ENCODE measurements at regions of chr5 and their contacts with region 1.

Region 1: GRCh38 chr5:68252673-68253623 is 37.4 kb downstream of the PIK3R1 start:
- DNase-seq: peak; percentile 67
- ATAC-seq: peak; percentile 34
- H3K4me3 Mint-ChIP-seq: no peak overlapping the region
- H3K27ac Mint-ChIP-seq: peak overlapping the region; percentile 17
- H3K4me1 Mint-ChIP-seq: peaks cover 90% of the 10 kb centered on the region
- H3K27me3 Mint-ChIP-seq: no peaks in the 10 kb centered on the region
- CTCF ChIP-seq: peak; percentile 67

Region 2: GRCh38 chr5:67246108-67246507 is 1006.8 kb before region 1 on chr5:
- CTCF ChIA-PET with region 1: interaction called, 17 read pairs
- POLR2A ChIA-PET with region 1: no interaction called
- intact Hi-C with region 1: loop called (anchors 10 kb)
- DNase-seq: peak; percentile 13
- ATAC-seq: peak; percentile 30
- H3K4me3 Mint-ChIP-seq: no peak overlapping the region
- H3K27ac Mint-ChIP-seq: no peak overlapping the region
- H3K4me1 Mint-ChIP-seq: peaks cover 11% of the 10 kb centered on the region
- H3K27me3 Mint-ChIP-seq: no peaks in the 10 kb centered on the region
- CTCF ChIP-seq: peak; percentile 85

Region 3: GRCh38 chr5:68159224-68159951 is 93.6 kb before region 1 on chr5:
- CTCF ChIA-PET with region 1: no interaction called
- POLR2A ChIA-PET with region 1: no interaction called
- intact Hi-C with region 1: no loop called
- DNase-seq: no peak
- ATAC-seq: no peak
- H3K4me3 Mint-ChIP-seq: no peak overlapping the region
- H3K27ac Mint-ChIP-seq: no peak overlapping the region
- H3K4me1 Mint-ChIP-seq: no peaks in the 10 kb centered on the region
- H3K27me3 Mint-ChIP-seq: no peaks in the 10 kb centered on the region
- CTCF ChIP-seq: no peak

Region 4: DNA sequence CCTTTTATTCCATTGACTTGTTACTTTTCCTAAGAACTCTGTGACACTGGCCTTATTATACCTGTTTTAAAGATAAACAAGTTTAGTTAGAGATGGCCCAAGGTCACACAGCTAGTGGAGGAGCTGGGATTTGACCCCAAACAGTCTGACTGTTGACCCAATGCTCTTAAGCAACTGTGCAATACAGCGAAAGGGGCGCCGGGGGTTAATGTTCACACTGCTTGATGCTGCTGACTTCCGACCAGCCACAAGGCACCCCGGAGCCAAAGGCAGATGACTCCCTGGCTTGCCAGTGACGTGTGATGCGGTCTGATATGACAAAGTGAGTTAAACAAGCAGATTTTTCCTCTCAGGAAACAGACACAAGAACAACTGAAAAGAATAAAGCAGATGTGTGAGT is 13.5 kb before region 1 on chr5:
- CTCF ChIA-PET with region 1: interaction called, 10 read pairs
- POLR2A ChIA-PET with region 1: interaction called, 3 read pairs
- intact Hi-C with region 1: no loop called
- DNase-seq: peak; percentile 96
- ATAC-seq: peak; percentile 96
- H3K4me3 Mint-ChIP-seq: peak overlapping the region; percentile 30
- H3K27ac Mint-ChIP-seq: peak overlapping the region; percentile 80
- H3K4me1 Mint-ChIP-seq: peaks cover 78% of the 10 kb centered on the region
- H3K27me3 Mint-ChIP-seq: no peaks in the 10 kb centered on the region
- CTCF ChIP-seq: no peak

Region 5: GRCh38 chr5:68272289-68272688 is 19.3 kb after region 1 on chr5:
- CTCF ChIA-PET with region 1: interaction called, 35 read pairs
- POLR2A ChIA-PET with region 1: no interaction called
- intact Hi-C with region 1: no loop called
- DNase-seq: no peak
- ATAC-seq: no peak
- H3K4me3 Mint-ChIP-seq: no peak overlapping the region
- H3K27ac Mint-ChIP-seq: no peak overlapping the region
- H3K4me1 Mint-ChIP-seq: peaks cover 85% of the 10 kb centered on the region
- H3K27me3 Mint-ChIP-seq: no peaks in the 10 kb centered on the region
- CTCF ChIP-seq: peak; percentile 67

Region 6: GRCh38 chr5:68303038-68303738 is 50.2 kb after region 1 on chr5:
- CTCF ChIA-PET with region 1: no interaction called
- POLR2A ChIA-PET with region 1: no interaction called
- intact Hi-C with region 1: no loop called
- DNase-seq: no peak
- ATAC-seq: peak; percentile 57
- H3K4me3 Mint-ChIP-seq: no peak overlapping the region
- H3K27ac Mint-ChIP-seq: peak overlapping the region; percentile 77
- H3K4me1 Mint-ChIP-seq: peaks cover 36% of the 10 kb centered on the region
- H3K27me3 Mint-ChIP-seq: no peaks in the 10 kb centered on the region
- CTCF ChIP-seq: no peak